CD4-positive, alpha-beta T cell (primary cell): ENCODE measurements at regions of chr2 and their contacts with region 1.

Region 1: GRCh38 chr2:55575591-55575990 is 41.8 kb downstream of the PPP4R3B start:
- DNase-seq: no peak
- ATAC-seq: no peak
- H3K4me3 ChIP-seq: no peak overlapping the region
- H3K4me3 Mint-ChIP-seq: no peak overlapping the region
- H3K27ac ChIP-seq: no peak overlapping the region
- H3K27ac Mint-ChIP-seq: no peak overlapping the region
- H3K4me1 ChIP-seq: no peaks in the 10 kb centered on the region
- H3K4me1 Mint-ChIP-seq: no peaks in the 10 kb centered on the region
- H3K27me3 ChIP-seq: no peaks in the 10 kb centered on the region
- H3K27me3 Mint-ChIP-seq: no peaks in the 10 kb centered on the region
- CTCF ChIP-seq: no peak

Region 2: GRCh38 chr2:55500025-55500424 is 75.6 kb before region 1 on chr2:
- CTCF ChIA-PET with region 1: no interaction called
- POLR2A ChIA-PET with region 1: no interaction called
- intact Hi-C with region 1: no loop called
- DNase-seq: no peak
- ATAC-seq: no peak
- H3K4me3 ChIP-seq: no peak overlapping the region
- H3K4me3 Mint-ChIP-seq: no peak overlapping the region
- H3K27ac ChIP-seq: no peak overlapping the region
- H3K27ac Mint-ChIP-seq: no peak overlapping the region
- H3K4me1 ChIP-seq: no peaks in the 10 kb centered on the region
- H3K4me1 Mint-ChIP-seq: no peaks in the 10 kb centered on the region
- H3K27me3 ChIP-seq: no peaks in the 10 kb centered on the region
- H3K27me3 Mint-ChIP-seq: no peaks in the 10 kb centered on the region
- CTCF ChIP-seq: no peak

Region 3: DNA sequence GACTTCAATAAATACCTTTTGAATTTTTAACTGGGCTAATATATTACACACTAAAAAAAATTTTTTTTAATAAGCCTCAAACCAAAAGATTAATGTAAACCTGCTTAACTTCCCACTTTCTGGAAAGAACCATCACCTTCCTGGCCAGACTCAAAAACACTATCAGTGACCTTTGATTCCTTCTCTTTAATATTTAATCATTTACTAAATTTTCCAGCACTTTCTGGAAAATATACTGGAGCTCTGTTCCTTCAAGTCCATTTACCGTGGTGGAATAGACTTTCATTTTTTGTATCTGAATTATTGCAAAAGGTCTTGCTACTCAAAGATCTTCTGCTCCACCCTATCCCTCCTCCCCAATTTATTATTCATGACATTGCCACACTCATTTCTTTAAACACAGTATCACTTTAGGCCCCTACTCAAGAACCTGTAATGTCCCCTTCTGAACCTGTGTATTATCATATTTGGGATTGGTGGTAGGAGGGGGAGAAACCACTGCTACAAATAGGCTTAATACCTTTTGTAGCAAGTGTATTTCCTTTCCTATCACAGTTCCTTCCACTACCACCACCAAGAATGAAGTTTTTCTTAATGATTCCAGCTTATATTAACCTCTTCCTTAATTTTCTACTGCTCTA is 34.5 kb after region 1 on chr2:
- CTCF ChIA-PET with region 1: no interaction called
- POLR2A ChIA-PET with region 1: no interaction called
- intact Hi-C with region 1: loop called in 1 of 2 experiments (anchors 5 kb)
- DNase-seq: no peak
- ATAC-seq: no peak
- H3K4me3 ChIP-seq: no peak overlapping the region
- H3K4me3 Mint-ChIP-seq: peak overlapping the region; percentile 55
- H3K27ac ChIP-seq: no peak overlapping the region
- H3K27ac Mint-ChIP-seq: peak overlapping the region; percentile 70
- H3K4me1 ChIP-seq: peaks cover 19% of the 10 kb centered on the region
- H3K4me1 Mint-ChIP-seq: peaks cover 79% of the 10 kb centered on the region
- H3K27me3 ChIP-seq: no peaks in the 10 kb centered on the region
- H3K27me3 Mint-ChIP-seq: no peaks in the 10 kb centered on the region
- CTCF ChIP-seq: no peak